ENCODE measurements at regions of chr2 and their contacts with region 1.

Region 1: GRCh38 chr2:174487108-174487819 is 435 bp upstream of the GPR155 start:
- DNase-seq: peak; percentile 66 to 93 (median 78)
- ATAC-seq: peak; percentile 89
- H3K4me3 ChIP-seq: peak overlapping the region; percentile 90
- H3K4me3 Mint-ChIP-seq: peak overlapping the region; percentile 92 to 100 (median 98)
- H3K27ac ChIP-seq: peak overlapping the region; percentile 87
- H3K27ac Mint-ChIP-seq: peak overlapping the region; percentile 88 to 100 (median 96)
- H3K4me1 ChIP-seq: peaks cover 31 to 38% of the 10 kb centered on the region in 2 donors
- H3K4me1 Mint-ChIP-seq: peaks cover 37 to 83% (median 77%) of the 10 kb centered on the region in 7 donors
- H3K27me3 ChIP-seq: no peaks in the 10 kb centered on the region
- H3K27me3 Mint-ChIP-seq: no peaks in the 10 kb centered on the region

Region 2: GRCh38 chr2:174248187-174248997 is 238.9 kb before region 1 on chr2 and contains the start of gene OLA1:
- CTCF ChIA-PET with region 1: no interaction called
- POLR2A ChIA-PET with region 1: no interaction called
- intact Hi-C with region 1: loop called in 1 of 2 experiments (anchors 1 kb)
- DNase-seq: peak; percentile 91 to 99 (median 95)
- ATAC-seq: peak; percentile 99
- H3K4me3 ChIP-seq: peak within 1 kb of the TSS; percentile 90
- H3K4me3 Mint-ChIP-seq: peak within 1 kb of the TSS; percentile 71 to 88 (median 86)
- H3K27ac ChIP-seq: peak within 1 kb of the TSS; percentile 82
- H3K27ac Mint-ChIP-seq: peak within 1 kb of the TSS; percentile 67 to 91 (median 79)
- H3K4me1 ChIP-seq: peaks cover 6 to 12% of the 10 kb centered on the region in 2 donors
- H3K4me1 Mint-ChIP-seq: peaks cover 18 to 32% (median 25%) of the 10 kb centered on the region in 7 donors
- H3K27me3 ChIP-seq: no peaks in the 10 kb centered on the region
- H3K27me3 Mint-ChIP-seq: peaks cover 0 to 5% (median 0%) of the 10 kb centered on the region in 5 donors
- total RNA-seq, gene OLA1: 34.4 to 84.7 (median 40.3) TPM

Region 3: DNA sequence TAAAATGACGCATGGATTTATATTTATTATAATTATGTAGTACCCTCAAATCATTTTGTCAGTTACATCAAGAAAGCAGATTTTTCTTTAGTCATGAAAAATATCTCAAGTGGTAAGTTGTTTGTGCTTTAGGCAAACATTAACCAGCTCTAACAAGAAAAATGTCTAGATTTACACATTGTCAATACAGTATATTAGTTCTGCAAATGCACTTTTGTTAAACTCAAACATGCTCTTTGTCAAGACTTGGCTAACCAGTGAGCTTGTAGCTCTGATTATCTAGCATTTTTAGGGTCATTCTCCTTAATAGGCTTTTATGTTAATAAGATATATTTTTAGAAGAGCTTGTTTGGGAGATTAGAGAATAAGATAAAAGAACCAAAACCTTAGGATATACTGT is 59.0 kb before region 1 on chr2:
- CTCF ChIA-PET with region 1: no interaction called
- POLR2A ChIA-PET with region 1: no interaction called
- intact Hi-C with region 1: no loop called
- DNase-seq: no peak
- ATAC-seq: no peak
- H3K4me3 ChIP-seq: no peak overlapping the region
- H3K4me3 Mint-ChIP-seq: no peak overlapping the region
- H3K27ac ChIP-seq: no peak overlapping the region
- H3K27ac Mint-ChIP-seq: no peak overlapping the region
- H3K4me1 ChIP-seq: no peaks in the 10 kb centered on the region
- H3K4me1 Mint-ChIP-seq: no peaks in the 10 kb centered on the region
- H3K27me3 ChIP-seq: no peaks in the 10 kb centered on the region
- H3K27me3 Mint-ChIP-seq: no peaks in the 10 kb centered on the region

Region 4: DNA sequence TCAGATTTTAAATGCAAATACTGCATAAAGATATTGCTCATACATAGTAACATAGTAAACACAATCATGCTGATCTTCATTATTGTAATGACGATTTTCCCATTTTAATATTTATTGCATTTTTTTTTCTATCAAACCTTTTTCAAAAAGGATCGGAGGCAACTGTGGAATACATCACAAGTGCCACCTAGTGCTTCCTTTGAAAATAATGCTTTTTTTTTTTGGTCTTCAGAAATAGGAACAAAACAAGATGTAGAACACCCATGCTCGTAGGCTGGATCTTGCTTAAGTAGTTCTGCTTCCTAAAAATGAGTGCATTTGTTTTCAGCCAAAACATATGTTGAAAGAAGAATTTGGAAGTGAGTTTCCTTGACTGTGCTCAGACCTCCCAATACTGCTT is 35.3 kb after region 1 on chr2:
- CTCF ChIA-PET with region 1: interaction called, 17 read pairs
- POLR2A ChIA-PET with region 1: interaction called, 6 read pairs
- intact Hi-C with region 1: loop called (anchors 1 to 2 kb)
- DNase-seq: peak in 2 of 9 donors; percentile 10 to 13
- ATAC-seq: peak; percentile 49
- H3K4me3 ChIP-seq: no peak overlapping the region
- H3K4me3 Mint-ChIP-seq: no peak overlapping the region
- H3K27ac ChIP-seq: no peak overlapping the region
- H3K27ac Mint-ChIP-seq: no peak overlapping the region
- H3K4me1 ChIP-seq: peaks cover 0 to 5% of the 10 kb centered on the region in 2 donors
- H3K4me1 Mint-ChIP-seq: peaks cover 10 to 28% (median 21%) of the 10 kb centered on the region in 7 donors
- H3K27me3 ChIP-seq: no peaks in the 10 kb centered on the region
- H3K27me3 Mint-ChIP-seq: peaks cover 0 to 23% (median 0%) of the 10 kb centered on the region in 5 donors

Region 5: DNA sequence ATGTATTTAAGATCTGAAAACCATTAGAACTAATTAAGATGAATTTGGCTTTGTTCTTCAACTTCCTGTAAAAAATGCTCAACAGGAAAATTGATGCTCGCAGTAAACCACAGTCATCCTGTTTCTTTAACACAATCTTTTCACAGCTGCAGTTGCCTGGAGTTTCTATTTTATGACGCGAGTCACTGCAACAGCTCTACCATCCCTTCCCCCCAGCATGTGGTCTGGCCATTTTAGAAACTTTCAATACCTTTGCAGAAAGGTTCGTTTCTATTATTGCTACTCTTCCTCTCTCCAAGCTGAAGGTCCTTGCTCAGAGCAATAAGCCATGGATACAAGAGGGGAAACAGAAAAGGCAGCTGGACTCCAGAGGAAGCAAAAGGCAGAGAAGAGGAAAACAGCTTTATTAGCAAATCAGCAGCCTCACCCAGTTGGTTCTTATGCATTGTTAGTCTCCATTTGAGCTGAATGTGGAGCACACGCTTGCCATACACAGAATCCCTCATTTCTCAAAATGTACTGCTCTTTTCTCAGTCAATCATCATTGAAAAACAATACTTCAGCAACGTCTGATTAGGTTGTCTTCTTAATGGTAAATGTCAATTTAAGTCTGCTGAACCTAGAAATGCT is 106.4 kb after region 1 on chr2:
- CTCF ChIA-PET with region 1: no interaction called
- POLR2A ChIA-PET with region 1: interaction called, 12 read pairs
- intact Hi-C with region 1: loop called (anchors 1 to 2 kb)
- DNase-seq: peak in 8 of 9 donors; percentile 53 to 92 (median 90)
- ATAC-seq: peak; percentile 87
- H3K4me3 ChIP-seq: peak overlapping the region; percentile 59
- H3K4me3 Mint-ChIP-seq: peak overlapping the region; percentile 87 to 100 (median 92)
- H3K27ac ChIP-seq: peak overlapping the region; percentile 90
- H3K27ac Mint-ChIP-seq: peak overlapping the region; percentile 90 to 99 (median 97)
- H3K4me1 ChIP-seq: peaks cover 42 to 44% of the 10 kb centered on the region in 2 donors
- H3K4me1 Mint-ChIP-seq: peaks cover 47 to 69% (median 59%) of the 10 kb centered on the region in 7 donors
- H3K27me3 ChIP-seq: no peaks in the 10 kb centered on the region
- H3K27me3 Mint-ChIP-seq: no peaks in the 10 kb centered on the region

Region 6: GRCh38 chr2:174778085-174778981 is 291.1 kb after region 1 on chr2:
- CTCF ChIA-PET with region 1: no interaction called
- POLR2A ChIA-PET with region 1: no interaction called
- intact Hi-C with region 1: loop called (anchors 1 to 5 kb)
- DNase-seq: peak; percentile 51 to 93 (median 91)
- ATAC-seq: peak; percentile 93
- H3K4me3 ChIP-seq: peak overlapping the region; percentile 3
- H3K4me3 Mint-ChIP-seq: peak overlapping the region; percentile 53 to 84 (median 72)
- H3K27ac ChIP-seq: peak overlapping the region; percentile 61
- H3K27ac Mint-ChIP-seq: peak overlapping the region; percentile 55 to 97 (median 95)
- H3K4me1 ChIP-seq: peaks cover 28 to 39% of the 10 kb centered on the region in 2 donors
- H3K4me1 Mint-ChIP-seq: peaks cover 34 to 60% (median 46%) of the 10 kb centered on the region in 7 donors
- H3K27me3 ChIP-seq: no peaks in the 10 kb centered on the region
- H3K27me3 Mint-ChIP-seq: no peaks in the 10 kb centered on the region